ENCODE measurements at regions of chr2 and their contacts with region 1.

Region 1: GRCh38 chr2:238945433-238946150 is 97.7 kb downstream of the TWIST2 start:
- DNase-seq: peak; percentile 68 to 83
- H3K4me3 ChIP-seq: no peak overlapping the region
- H3K27ac ChIP-seq: no peak overlapping the region
- H3K4me1 ChIP-seq: no peaks in the 10 kb centered on the region
- H3K27me3 ChIP-seq: peaks cover 0 to 10% of the 10 kb centered on the region in 2 donors
- CTCF ChIP-seq: peak; percentile 71 to 87

Region 2: DNA sequence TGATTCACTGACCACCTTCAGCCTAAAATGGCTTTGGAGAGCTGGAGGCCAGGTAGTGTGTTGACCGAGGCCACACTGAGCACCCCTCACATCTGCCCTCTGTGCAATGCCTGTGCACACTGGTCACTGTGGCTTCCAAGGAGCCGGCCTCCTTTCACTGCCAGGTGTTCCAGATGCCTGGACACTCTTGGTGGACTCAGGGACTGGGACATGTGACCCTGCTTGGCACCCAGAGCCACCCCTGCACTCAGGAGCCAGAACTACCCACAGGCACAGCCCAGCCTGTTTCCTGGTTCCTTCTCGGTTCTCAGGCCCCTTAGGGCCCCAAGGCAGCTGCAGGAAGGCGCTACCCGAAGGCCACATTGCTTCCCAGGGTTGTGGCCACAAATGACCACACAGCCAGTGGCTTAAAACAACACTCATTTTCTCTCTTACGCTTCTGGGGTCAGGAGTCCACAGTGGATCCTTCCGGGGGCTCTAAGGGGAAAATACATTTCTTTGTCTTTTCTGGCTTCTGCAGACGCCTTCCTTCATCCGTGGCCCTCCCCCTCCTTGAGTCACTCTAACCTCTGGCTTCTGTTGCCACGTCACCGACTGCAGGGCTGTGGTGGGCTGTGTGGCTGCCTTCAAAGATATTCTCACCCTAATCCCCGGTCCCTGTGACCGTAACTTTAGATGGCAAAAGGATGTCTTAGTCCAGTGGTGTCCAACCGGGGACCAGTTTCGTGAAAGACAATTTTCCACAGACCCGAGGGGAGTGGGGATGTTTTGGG is 440.3 kb before region 1 on chr2:
- intact Hi-C with region 1: no loop called
- DNase-seq: peak in 1 of 2 donors; percentile 51
- H3K4me3 ChIP-seq: no peak overlapping the region
- H3K27ac ChIP-seq: no peak overlapping the region
- H3K4me1 ChIP-seq: no peaks in the 10 kb centered on the region
- H3K27me3 ChIP-seq: peaks cover 0 to 9% of the 10 kb centered on the region in 2 donors
- CTCF ChIP-seq: no peak

Region 3: GRCh38 chr2:238714038-238714528 is 231.5 kb before region 1 on chr2:
- intact Hi-C with region 1: loop called (anchors 10 kb)
- DNase-seq: peak in 1 of 2 donors; percentile 51
- H3K4me3 ChIP-seq: no peak overlapping the region
- H3K27ac ChIP-seq: no peak overlapping the region
- H3K4me1 ChIP-seq: peaks cover 0 to 26% (median 4%) of the 10 kb centered on the region in 4 donors
- H3K27me3 ChIP-seq: peaks cover 0 to 3% of the 10 kb centered on the region in 2 donors
- CTCF ChIP-seq: no peak

Region 4: DNA sequence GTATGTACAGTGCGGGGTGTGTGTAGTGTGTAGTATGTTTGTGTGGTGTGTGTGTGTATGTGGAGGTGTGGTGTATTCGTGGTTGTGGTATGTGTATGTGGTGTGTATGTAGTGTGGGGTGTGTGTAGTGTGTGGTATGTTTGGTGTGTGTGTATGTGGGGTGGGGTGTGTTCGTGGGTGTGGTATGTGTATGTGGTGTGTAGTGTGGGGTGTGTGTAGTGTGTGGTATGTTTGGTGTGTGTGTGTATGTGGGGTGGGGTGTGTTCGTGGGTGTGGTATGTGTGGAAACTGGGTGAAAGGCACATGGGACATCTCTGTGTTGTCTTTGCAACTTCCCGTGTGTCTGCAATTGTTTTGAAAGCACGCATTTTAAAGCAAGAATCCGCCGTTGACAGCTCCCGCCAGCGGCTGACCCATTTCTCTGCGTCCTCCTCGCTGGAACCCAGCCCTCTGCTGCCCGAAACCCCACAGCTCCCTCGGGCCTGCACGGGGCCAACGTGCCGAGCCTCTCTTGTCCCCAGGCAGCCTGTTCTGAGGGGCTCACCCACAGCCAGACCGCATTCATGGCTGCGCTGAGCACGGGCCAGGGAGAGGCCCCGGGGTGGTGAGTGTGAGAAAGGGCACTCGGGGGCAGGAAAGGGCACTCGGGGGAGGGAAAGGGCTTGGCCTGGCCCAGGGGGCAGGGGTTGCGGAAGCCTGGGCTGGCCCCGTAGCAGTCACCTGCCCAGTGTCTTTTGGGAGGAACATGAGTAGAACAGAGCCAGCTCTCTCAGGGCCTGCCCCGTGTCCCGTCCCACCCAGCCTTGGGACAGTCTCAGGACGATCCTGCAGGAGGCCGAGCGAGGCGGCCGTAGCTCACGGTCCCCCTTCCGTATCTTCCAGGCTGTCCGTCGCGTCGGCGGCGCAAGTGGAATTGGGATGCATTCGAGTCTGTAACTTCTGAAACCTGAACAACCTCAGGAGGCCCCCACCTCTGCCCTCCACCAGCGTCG is 36.3 kb before region 1 on chr2:
- intact Hi-C with region 1: no loop called
- DNase-seq: peak; percentile 55 to 76
- H3K4me3 ChIP-seq: no peak overlapping the region
- H3K27ac ChIP-seq: no peak overlapping the region
- H3K4me1 ChIP-seq: peaks cover 0 to 4% (median 0%) of the 10 kb centered on the region in 4 donors
- H3K27me3 ChIP-seq: no peaks in the 10 kb centered on the region
- CTCF ChIP-seq: no peak